ENCODE measurements at regions of chr5 and their contacts with region 1.

Region 1: GRCh38 chr5:171571663-171572062 is 152.2 kb downstream of the FGF18 start:
- DNase-seq: no peak

Region 2: GRCh38 chr5:171494452-171495121 is 77.1 kb before region 1 on chr5:
- intact Hi-C with region 1: loop called (anchors 5 kb)
- DNase-seq: peak; percentile 83

Region 3: GRCh38 chr5:171721464-171721863 is 149.8 kb after region 1 on chr5:
- intact Hi-C with region 1: no loop called
- DNase-seq: no peak